ENCODE measurements at regions of chr3 and their contacts with region 1.

Region 1: GRCh38 chr3:14402304-14402811 is at the start of gene SLC6A6:
- DNase-seq: peak; percentile 91
- H3K4me3 Mint-ChIP-seq: peak within 1 kb of the TSS; percentile 96
- H3K27ac Mint-ChIP-seq: peak within 1 kb of the TSS; percentile 91
- H3K4me1 Mint-ChIP-seq: peaks cover 32% of the 10 kb centered on the region
- H3K27me3 Mint-ChIP-seq: no peaks in the 10 kb centered on the region
- total RNA-seq, gene SLC6A6: 32.2 to 36.9 TPM

Region 2: GRCh38 chr3:13479581-13480339 is 922.6 kb before region 1 on chr3 and contains the start of gene HDAC11:
- CTCF ChIA-PET with region 1: no interaction called
- intact Hi-C with region 1: loop called (anchors 1 kb)
- DNase-seq: peak; percentile 99
- H3K4me3 Mint-ChIP-seq: peak within 1 kb of the TSS; percentile 92
- H3K27ac Mint-ChIP-seq: peak within 1 kb of the TSS; percentile 82
- H3K4me1 Mint-ChIP-seq: peaks cover 12% of the 10 kb centered on the region
- H3K27me3 Mint-ChIP-seq: no peaks in the 10 kb centered on the region
- total RNA-seq, gene HDAC11: 1.6 to 2.4 TPM

Region 3: DNA sequence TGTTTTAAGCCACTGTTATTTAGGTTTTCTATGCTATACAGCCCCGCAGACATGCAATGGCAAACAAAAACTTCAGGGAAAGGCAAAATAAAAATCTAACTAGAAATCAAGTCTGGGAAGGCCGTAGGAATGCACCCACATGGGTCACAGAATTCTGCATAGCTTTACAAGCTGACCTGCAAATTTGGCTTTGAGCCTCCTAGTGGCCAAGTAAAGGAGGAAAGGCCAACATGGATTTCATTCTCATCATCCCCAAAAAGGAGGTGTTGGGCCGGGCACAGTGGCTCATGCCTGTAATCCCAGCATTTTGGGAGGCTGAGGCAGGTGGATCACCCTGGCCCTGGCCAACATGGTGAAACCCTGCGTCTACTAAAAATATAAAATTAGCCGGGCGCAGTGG is 729.1 kb before region 1 on chr3:
- CTCF ChIA-PET with region 1: no interaction called
- intact Hi-C with region 1: no loop called
- DNase-seq: no peak
- H3K4me3 Mint-ChIP-seq: no peak overlapping the region
- H3K27ac Mint-ChIP-seq: no peak overlapping the region
- H3K4me1 Mint-ChIP-seq: no peaks in the 10 kb centered on the region
- H3K27me3 Mint-ChIP-seq: peaks cover 3% of the 10 kb centered on the region

Region 4: DNA sequence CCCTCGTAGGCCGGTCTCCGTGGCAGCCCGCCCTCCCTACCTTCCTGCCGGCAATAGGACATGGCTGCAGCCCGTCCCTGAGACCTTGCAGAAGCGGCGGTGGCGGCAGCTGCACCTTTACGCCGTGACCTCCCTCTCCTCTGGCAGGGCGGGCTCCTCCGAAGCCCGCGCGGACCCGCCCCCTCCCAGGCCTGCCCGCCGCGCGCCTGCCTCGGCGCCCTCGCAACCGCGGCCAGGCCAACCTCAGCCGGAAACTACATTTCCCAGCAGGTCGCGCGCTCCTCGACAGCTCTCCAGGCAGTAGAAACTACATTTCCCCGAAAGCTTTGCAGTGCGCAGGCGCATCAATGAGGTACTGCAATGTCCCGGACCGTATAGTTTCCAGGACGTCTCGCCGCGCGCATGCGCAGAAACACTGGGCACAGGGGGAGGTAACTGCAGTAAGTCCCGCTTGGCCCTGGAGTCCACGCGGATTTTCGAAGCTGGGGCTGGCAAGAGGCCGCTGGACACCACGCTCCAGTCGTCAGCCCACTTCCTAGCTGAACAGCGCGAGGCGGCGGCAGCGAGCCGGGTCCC is 277.7 kb before region 1 on chr3 and contains the starts of genes CHCHD4 and TMEM43:
- CTCF ChIA-PET with region 1: no interaction called
- intact Hi-C with region 1: loop called (anchors 1 kb)
- DNase-seq: peak; percentile 99
- H3K4me3 Mint-ChIP-seq: peak within 1 kb of the TSS; percentile 93
- H3K27ac Mint-ChIP-seq: peak within 1 kb of the TSS; percentile 92
- H3K4me1 Mint-ChIP-seq: peaks cover 50% of the 10 kb centered on the region
- H3K27me3 Mint-ChIP-seq: no peaks in the 10 kb centered on the region
- total RNA-seq, gene CHCHD4: 16.2 to 17.9 TPM
- total RNA-seq, gene TMEM43: 18.3 to 19.8 TPM

Region 5: DNA sequence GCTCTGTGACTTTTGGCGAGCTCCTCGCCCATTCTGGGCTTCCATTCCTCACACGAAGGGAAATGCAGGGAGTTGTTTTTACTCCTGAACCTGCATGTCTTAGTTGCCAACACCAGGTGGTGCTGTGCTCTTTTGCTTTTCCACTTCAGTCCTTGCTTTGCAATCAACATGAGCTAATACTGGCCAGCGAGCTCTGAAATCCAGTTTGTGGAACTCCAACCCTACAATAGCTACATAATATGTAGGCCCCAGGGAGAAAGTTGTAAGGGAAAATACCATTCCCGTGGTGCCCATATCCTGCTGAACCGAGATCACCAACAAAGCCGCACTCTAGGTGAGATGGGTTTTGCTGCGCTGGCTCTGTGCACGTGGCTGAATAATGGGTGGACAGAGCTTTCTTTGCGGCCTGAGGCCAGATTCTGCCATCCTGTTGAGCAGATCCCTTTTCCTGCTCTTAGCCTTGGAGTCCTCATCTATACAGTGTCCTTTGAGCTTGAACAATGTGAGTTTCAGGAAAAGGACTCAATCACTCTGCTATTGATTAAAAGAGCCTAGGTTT is 198.8 kb before region 1 on chr3:
- CTCF ChIA-PET with region 1: interaction called, 4 read pairs
- intact Hi-C with region 1: loop called (anchors 5 kb)
- DNase-seq: peak; percentile 64
- H3K4me3 Mint-ChIP-seq: no peak overlapping the region
- H3K27ac Mint-ChIP-seq: no peak overlapping the region
- H3K4me1 Mint-ChIP-seq: peaks cover 2% of the 10 kb centered on the region
- H3K27me3 Mint-ChIP-seq: no peaks in the 10 kb centered on the region

Region 6: DNA sequence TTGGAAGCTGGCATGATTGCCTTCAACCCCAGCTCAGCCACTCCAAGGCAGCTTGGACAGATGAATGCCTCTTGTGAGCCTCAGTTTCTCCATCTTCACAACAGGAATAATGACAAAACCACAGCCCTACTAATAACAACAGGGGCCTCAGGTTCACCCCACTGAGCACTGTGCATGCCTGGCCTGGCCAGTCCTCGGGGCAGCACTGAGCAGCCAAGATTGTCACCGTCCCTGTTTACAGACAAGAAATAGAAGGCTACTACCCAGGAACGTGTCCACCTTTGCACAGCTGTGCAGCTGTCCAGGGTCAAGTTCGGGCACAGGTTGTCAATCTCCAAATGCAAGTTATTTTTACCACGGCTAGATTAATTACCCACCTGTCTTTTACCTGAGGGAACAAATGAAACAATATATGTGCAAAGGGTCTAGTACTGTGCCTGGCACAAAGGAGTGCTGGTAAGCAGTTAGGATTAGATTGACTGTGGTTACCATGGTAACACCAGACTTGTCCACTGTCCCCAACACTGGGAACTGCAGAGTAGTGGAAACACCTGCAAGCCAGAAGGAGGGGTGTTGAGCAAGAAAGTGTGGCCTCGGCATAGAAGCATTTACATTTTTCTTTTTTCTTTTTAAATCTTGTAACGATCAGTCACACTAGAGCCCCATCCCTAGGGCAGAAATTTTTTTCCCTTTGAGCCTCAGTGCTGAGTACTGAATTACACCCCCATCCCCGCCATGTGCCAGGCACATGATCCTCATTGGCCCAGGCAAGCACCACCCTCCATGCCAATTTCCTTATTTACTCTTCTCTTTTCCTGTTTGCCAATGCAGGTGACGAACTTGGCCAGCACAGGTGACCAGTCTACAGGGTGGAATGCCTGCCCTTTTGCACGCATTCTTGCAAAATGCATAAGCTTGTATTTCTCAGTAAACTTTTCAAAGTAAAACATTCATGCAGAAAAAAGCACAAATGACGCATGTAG is 66.3 kb before region 1 on chr3:
- CTCF ChIA-PET with region 1: no interaction called
- intact Hi-C with region 1: no loop called
- DNase-seq: no peak
- H3K4me3 Mint-ChIP-seq: no peak overlapping the region
- H3K27ac Mint-ChIP-seq: no peak overlapping the region
- H3K4me1 Mint-ChIP-seq: peaks cover 2% of the 10 kb centered on the region
- H3K27me3 Mint-ChIP-seq: no peaks in the 10 kb centered on the region

Region 7: DNA sequence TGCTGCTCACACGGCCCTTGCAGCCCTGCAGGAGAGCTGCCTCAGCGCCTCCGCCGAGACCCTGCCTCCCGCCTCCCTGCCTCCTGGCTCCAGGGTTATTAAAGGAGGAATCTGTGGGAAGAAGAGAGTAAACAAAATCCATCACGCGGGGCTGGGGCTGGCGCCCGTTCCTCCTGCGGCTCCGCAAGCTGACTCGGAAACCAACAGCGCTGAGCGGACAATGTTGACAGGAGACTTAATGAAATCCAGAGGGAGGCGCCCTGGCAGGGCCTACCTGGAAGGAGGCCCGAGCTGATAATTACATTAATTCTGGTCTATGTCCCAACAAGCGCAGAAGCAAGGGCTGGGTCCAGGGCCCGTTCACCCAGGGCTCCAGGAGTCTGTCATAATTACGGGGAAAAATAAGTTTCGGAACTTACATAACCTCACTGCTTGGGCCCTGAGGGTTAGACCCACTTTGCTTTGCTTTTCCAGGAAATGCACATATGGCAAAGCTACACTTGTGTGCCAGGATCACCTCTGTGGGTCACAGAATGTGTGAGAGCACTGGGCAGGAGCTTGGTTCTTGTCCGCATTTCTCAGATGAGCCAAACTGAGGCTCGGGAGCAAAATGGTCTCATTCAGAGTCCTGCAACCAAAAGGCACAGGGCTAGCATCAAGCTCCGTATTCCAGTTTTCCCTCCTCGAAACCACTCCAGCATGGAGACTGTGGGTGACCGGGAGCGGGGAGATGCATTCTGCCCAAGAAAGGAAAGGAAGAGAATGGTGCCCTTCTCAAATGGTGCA is 43.7 kb before region 1 on chr3:
- CTCF ChIA-PET with region 1: no interaction called
- intact Hi-C with region 1: no loop called
- DNase-seq: no peak
- H3K4me3 Mint-ChIP-seq: no peak overlapping the region
- H3K27ac Mint-ChIP-seq: no peak overlapping the region
- H3K4me1 Mint-ChIP-seq: no peaks in the 10 kb centered on the region
- H3K27me3 Mint-ChIP-seq: no peaks in the 10 kb centered on the region

Region 8: GRCh38 chr3:14431892-14432834 is 29.8 kb after region 1 on chr3:
- CTCF ChIA-PET with region 1: interaction called, 34 read pairs
- intact Hi-C with region 1: loop called (anchors 1 kb)
- DNase-seq: peak; percentile 98
- H3K4me3 Mint-ChIP-seq: peak overlapping the region; percentile 66
- H3K27ac Mint-ChIP-seq: peak overlapping the region; percentile 94
- H3K4me1 Mint-ChIP-seq: peaks cover 76% of the 10 kb centered on the region
- H3K27me3 Mint-ChIP-seq: no peaks in the 10 kb centered on the region

Region 9: GRCh38 chr3:14461748-14462324 is 59.5 kb after region 1 on chr3:
- CTCF ChIA-PET with region 1: interaction called, 14 read pairs
- intact Hi-C with region 1: loop called (anchors 1 kb)
- DNase-seq: peak; percentile 77
- H3K4me3 Mint-ChIP-seq: no peak overlapping the region
- H3K27ac Mint-ChIP-seq: peak overlapping the region; percentile 59
- H3K4me1 Mint-ChIP-seq: peaks cover 36% of the 10 kb centered on the region
- H3K27me3 Mint-ChIP-seq: no peaks in the 10 kb centered on the region

Region 10: GRCh38 chr3:14467814-14468620 is 65.7 kb after region 1 on chr3:
- CTCF ChIA-PET with region 1: interaction called, 14 read pairs
- intact Hi-C with region 1: loop called (anchors 1 kb)
- DNase-seq: peak; percentile 47
- H3K4me3 Mint-ChIP-seq: no peak overlapping the region
- H3K27ac Mint-ChIP-seq: peak overlapping the region; percentile 30
- H3K4me1 Mint-ChIP-seq: peaks cover under 1% of the 10 kb centered on the region
- H3K27me3 Mint-ChIP-seq: no peaks in the 10 kb centered on the region

Region 11: DNA sequence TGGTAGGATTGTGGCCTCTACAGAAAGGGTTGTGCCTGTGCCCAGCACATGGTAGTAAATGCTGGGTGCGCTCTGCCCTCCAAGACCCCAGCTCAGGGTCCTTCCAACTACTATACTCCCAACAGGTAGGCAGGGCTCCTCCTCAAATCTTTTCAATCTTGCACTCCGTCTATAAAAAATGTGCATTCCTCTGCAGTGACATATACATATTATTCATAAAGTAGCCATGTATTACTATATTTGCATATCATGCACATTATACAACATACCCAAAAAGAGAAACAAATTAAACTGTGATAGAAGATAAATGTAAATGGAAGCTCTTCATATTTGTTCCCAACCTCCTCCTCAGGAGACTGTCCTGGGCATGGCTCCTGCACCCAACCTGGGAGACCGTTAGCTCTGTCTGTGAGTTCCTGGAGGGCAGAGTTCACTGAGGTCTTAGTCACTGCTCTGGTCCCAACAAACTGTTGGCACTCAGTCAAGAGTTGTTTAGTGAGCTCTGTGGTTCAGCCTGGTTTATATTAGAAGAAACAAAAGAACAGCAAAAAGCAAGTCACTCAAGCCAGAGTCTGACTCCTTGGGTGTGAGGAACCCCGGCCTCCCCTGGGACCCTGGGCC is 185.5 kb after region 1 on chr3:
- CTCF ChIA-PET with region 1: no interaction called
- intact Hi-C with region 1: no loop called
- DNase-seq: no peak
- H3K4me3 Mint-ChIP-seq: no peak overlapping the region
- H3K27ac Mint-ChIP-seq: no peak overlapping the region
- H3K4me1 Mint-ChIP-seq: no peaks in the 10 kb centered on the region
- H3K27me3 Mint-ChIP-seq: peaks cover 11% of the 10 kb centered on the region